GM10248 (cell line): ENCODE measurements at regions of chr2 and their contacts with region 1.

Region 1: DNA sequence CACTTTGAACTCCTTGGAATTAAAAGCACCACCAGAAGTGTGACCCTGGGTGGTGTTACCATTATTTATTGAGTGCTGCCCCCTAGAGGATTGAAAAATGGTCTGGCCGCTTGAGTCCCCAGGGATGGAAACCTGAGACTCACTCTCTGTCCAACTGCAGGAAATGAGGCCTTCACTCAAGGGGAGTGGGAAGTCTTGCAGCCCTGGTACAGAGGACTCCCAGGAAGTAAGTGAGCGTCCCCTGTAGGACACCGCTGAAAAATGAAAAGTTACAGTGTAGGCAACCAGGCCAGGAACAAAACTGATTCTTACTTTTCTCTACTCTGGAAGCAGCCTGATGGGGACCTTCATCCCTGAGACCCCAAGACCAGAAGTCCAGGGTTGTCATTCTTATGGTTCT is 2.2 kb upstream of the NRP2 start:
- DNase-seq: peak; percentile 56
- CTCF ChIP-seq: peak; percentile 69

Region 2: DNA sequence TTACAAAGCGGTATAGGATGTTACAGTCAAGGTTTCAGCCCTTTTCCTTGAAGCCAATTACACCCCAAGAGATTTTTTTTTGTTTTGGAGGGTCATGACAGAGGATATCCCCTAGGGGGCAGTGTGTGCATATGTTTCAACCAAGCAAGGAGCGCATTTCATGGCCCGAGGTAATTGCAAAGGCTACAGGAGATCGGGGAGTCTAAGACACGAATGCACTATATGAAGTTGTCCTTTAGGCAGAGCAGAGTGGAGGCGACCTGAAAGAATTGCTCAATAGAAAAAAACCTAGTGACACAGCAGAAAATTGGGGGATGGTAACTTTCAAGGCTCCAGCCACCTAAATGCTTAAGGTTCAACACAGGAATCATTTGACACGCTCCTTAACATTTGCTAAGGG is 1354.6 kb before region 1 on chr2:
- CTCF ChIA-PET with region 1: interaction called, 10 read pairs
- POLR2A ChIA-PET with region 1: no interaction called
- DNase-seq: peak; percentile 47
- CTCF ChIP-seq: peak; percentile 69

Region 3: DNA sequence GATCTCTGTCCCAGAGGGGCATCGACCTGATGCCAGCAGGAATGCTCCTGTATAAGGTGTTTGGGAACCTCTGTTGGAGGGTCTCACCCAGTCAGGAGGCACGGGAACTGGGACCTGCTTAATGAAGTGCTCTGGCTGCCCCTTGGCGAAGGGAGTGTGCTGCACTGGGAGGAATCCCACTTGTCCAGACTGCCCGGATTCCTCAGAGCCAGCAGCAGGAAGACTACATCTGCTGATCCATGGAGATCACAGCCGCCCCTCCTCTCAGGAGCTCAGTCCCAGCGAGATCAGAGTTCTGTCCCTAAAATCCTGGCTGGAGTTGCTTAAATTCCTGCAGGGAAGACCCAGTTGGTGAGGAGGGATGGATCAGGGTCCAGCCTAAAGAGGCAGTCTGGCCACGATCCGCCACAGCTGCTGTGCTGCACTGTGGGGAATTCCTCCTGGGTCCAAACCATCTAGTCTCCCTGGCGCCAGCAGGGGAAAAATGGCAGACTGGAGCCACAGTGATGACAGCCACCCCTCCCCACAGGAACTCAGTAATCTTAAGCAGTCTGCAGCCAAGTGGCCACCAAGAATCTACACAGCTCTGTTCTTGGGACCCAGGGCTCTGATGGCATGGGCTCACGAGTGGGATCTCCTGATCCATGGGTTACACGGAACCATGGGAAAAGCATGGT is 74.3 kb before region 1 on chr2:
- CTCF ChIA-PET with region 1: no interaction called
- POLR2A ChIA-PET with region 1: no interaction called
- DNase-seq: no peak
- CTCF ChIP-seq: no peak

Region 4: GRCh38 chr2:205660521-205661124 is 19.4 kb before region 1 on chr2:
- CTCF ChIA-PET with region 1: interaction called, 21 read pairs
- POLR2A ChIA-PET with region 1: no interaction called
- DNase-seq: peak; percentile 31
- CTCF ChIP-seq: no peak

Region 5: GRCh38 chr2:205700331-205701132 is 20.5 kb after region 1 on chr2:
- CTCF ChIA-PET with region 1: interaction called, 20 read pairs
- POLR2A ChIA-PET with region 1: no interaction called
- DNase-seq: no peak
- CTCF ChIP-seq: no peak

Region 6: DNA sequence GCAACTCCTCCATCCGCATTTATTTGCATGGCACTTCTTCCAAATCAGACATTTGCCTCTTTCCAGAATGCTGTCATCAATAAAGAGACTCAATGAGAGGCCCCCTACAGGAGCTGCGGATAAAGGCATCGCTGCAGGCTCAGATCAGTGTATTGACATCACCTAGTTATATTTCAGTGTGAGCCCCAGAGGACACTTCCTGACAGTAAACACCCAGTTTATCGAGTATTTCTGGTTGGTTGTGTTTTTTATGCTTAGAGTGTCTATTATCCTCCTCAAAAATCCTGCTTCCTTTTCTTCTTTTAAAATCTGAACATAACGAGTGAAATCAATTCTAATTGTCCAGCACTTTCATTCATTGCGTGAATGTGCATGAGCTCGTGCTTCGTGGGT is 41.0 kb after region 1 on chr2:
- CTCF ChIA-PET with region 1: interaction called, 16 read pairs
- POLR2A ChIA-PET with region 1: no interaction called
- DNase-seq: no peak
- CTCF ChIP-seq: no peak